CD4-positive, alpha-beta T cell (primary cell): ENCODE measurements at regions of chr5 and their contacts with region 1.

Region 1: GRCh38 chr5:39100851-39101396 is 26.7 kb upstream of the RICTOR start:
- DNase-seq: peak in 2 of 14 experiments; percentile 17 to 21
- ATAC-seq: no peak
- H3K4me3 ChIP-seq: no peak overlapping the region
- H3K4me3 Mint-ChIP-seq: peak overlapping the region; percentile 40
- H3K27ac ChIP-seq: peak overlapping the region in 1 of 2 donors; percentile 20
- H3K27ac Mint-ChIP-seq: peak overlapping the region; percentile 81
- H3K4me1 ChIP-seq: peaks cover 17% of the 10 kb centered on the region
- H3K4me1 Mint-ChIP-seq: peaks cover 46% of the 10 kb centered on the region
- H3K27me3 ChIP-seq: no peaks in the 10 kb centered on the region
- H3K27me3 Mint-ChIP-seq: no peaks in the 10 kb centered on the region
- CTCF ChIP-seq: no peak

Region 2: GRCh38 chr5:39005566-39006232 is 95.2 kb before region 1 on chr5:
- CTCF ChIA-PET with region 1: interaction called, 8 read pairs
- POLR2A ChIA-PET with region 1: no interaction called
- intact Hi-C with region 1: loop called (anchors 5 kb)
- DNase-seq: peak in 4 of 14 experiments; percentile 20 to 59 (median 48)
- ATAC-seq: peak; percentile 86
- H3K4me3 ChIP-seq: no peak overlapping the region
- H3K4me3 Mint-ChIP-seq: no peak overlapping the region
- H3K27ac ChIP-seq: no peak overlapping the region
- H3K27ac Mint-ChIP-seq: peak overlapping the region; percentile 64
- H3K4me1 ChIP-seq: peaks cover 4% of the 10 kb centered on the region
- H3K4me1 Mint-ChIP-seq: peaks cover 61% of the 10 kb centered on the region
- H3K27me3 ChIP-seq: no peaks in the 10 kb centered on the region
- H3K27me3 Mint-ChIP-seq: no peaks in the 10 kb centered on the region
- CTCF ChIP-seq: peak; percentile 64

Region 3: DNA sequence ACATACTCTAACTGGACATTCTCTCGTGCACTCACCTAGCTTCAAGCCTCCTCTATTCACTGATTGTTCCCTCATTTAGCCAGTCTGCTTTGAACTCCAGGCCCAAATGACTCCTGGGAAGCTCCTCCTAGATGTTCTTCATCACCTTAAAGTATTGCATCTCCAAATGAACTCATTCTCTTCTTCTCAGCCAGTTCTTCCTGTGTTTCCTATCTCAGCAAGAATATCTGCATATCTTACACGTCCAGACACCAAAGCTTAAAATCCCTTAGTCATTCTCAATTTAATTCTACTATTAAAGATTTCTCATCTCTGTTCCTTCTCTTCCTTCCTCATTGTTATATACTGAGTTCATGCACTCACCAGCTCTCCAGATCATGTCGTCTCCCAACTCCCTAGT is 442.4 kb after region 1 on chr5:
- CTCF ChIA-PET with region 1: no interaction called
- POLR2A ChIA-PET with region 1: no interaction called
- intact Hi-C with region 1: no loop called
- DNase-seq: no peak
- ATAC-seq: no peak
- H3K4me3 ChIP-seq: no peak overlapping the region
- H3K4me3 Mint-ChIP-seq: no peak overlapping the region
- H3K27ac ChIP-seq: no peak overlapping the region
- H3K27ac Mint-ChIP-seq: no peak overlapping the region
- H3K4me1 ChIP-seq: no peaks in the 10 kb centered on the region
- H3K4me1 Mint-ChIP-seq: peaks cover 7% of the 10 kb centered on the region
- H3K27me3 ChIP-seq: peaks cover 0 to 6% of the 10 kb centered on the region in 2 experiments
- H3K27me3 Mint-ChIP-seq: peaks cover 3% of the 10 kb centered on the region
- CTCF ChIP-seq: no peak